Heart left ventricle (tissue), 16 donors: ENCODE measurements at regions of chr4 and their contacts with region 1.

Region 1: GRCh38 chr4:107094332-107094731 is 58.2 kb upstream of the DKK2 start:
- DNase-seq: no peak
- ATAC-seq: no peak
- H3K4me3 ChIP-seq: no peak overlapping the region
- H3K27ac ChIP-seq: no peak overlapping the region
- H3K4me1 ChIP-seq: no peaks in the 10 kb centered on the region
- H3K27me3 ChIP-seq: no peaks in the 10 kb centered on the region
- CTCF ChIP-seq: no peak
- POLR2A ChIP-seq: no peak

Region 2: GRCh38 chr4:107129076-107129475 is 34.7 kb after region 1 on chr4:
- intact Hi-C with region 1: loop called in 1 of 10 experiments (anchors 2 kb)
- DNase-seq: no peak
- ATAC-seq: no peak
- H3K4me3 ChIP-seq: no peak overlapping the region
- H3K27ac ChIP-seq: no peak overlapping the region
- H3K4me1 ChIP-seq: no peaks in the 10 kb centered on the region
- H3K27me3 ChIP-seq: no peaks in the 10 kb centered on the region
- CTCF ChIP-seq: no peak
- POLR2A ChIP-seq: no peak

Region 3: GRCh38 chr4:107376293-107376692 is 282.0 kb after region 1 on chr4:
- intact Hi-C with region 1: no loop called
- DNase-seq: no peak
- ATAC-seq: no peak
- H3K4me3 ChIP-seq: no peak overlapping the region
- H3K27ac ChIP-seq: no peak overlapping the region
- H3K4me1 ChIP-seq: no peaks in the 10 kb centered on the region
- H3K27me3 ChIP-seq: no peaks in the 10 kb centered on the region
- CTCF ChIP-seq: no peak
- POLR2A ChIP-seq: no peak